ENCODE measurements at regions of chr3 and their contacts with region 1.

Region 1: GRCh38 chr3:14651440-14652251 is at the start of gene CCDC174:
- DNase-seq: peak; percentile 90 to 100 (median 94)
- ATAC-seq: peak; percentile 97
- H3K4me3 ChIP-seq: peak within 1 kb of the TSS; percentile 75
- H3K4me3 Mint-ChIP-seq: peak within 1 kb of the TSS; percentile 87
- H3K27ac ChIP-seq: peak within 1 kb of the TSS; percentile 76 to 97
- H3K27ac Mint-ChIP-seq: peak within 1 kb of the TSS; percentile 85
- H3K4me1 ChIP-seq: peaks cover 29% of the 10 kb centered on the region
- H3K4me1 Mint-ChIP-seq: peaks cover 61% of the 10 kb centered on the region
- H3K27me3 ChIP-seq: no peaks in the 10 kb centered on the region
- H3K27me3 Mint-ChIP-seq: no peaks in the 10 kb centered on the region
- CTCF ChIP-seq: no peak
- total RNA-seq, gene CCDC174: 32.9 to 37.5 TPM

Region 2: GRCh38 chr3:13884851-13885703 is 766.6 kb before region 1 on chr3:
- CTCF ChIA-PET with region 1: interaction called, 4 read pairs
- POLR2A ChIA-PET with region 1: no interaction called
- intact Hi-C with region 1: loop called in 1 of 2 experiments (anchors 10 kb)
- DNase-seq: peak; percentile 61 to 88 (median 72)
- ATAC-seq: peak; percentile 79
- H3K4me3 ChIP-seq: no peak overlapping the region
- H3K4me3 Mint-ChIP-seq: peak overlapping the region; percentile 78
- H3K27ac ChIP-seq: no peak overlapping the region
- H3K27ac Mint-ChIP-seq: peak overlapping the region; percentile 3
- H3K4me1 ChIP-seq: peaks cover 27% of the 10 kb centered on the region
- H3K4me1 Mint-ChIP-seq: peaks cover 22% of the 10 kb centered on the region
- H3K27me3 ChIP-seq: peaks cover 4 to 13% of the 10 kb centered on the region in 2 experiments
- H3K27me3 Mint-ChIP-seq: peaks cover 15% of the 10 kb centered on the region
- CTCF ChIP-seq: peak; percentile 95

Region 3: DNA sequence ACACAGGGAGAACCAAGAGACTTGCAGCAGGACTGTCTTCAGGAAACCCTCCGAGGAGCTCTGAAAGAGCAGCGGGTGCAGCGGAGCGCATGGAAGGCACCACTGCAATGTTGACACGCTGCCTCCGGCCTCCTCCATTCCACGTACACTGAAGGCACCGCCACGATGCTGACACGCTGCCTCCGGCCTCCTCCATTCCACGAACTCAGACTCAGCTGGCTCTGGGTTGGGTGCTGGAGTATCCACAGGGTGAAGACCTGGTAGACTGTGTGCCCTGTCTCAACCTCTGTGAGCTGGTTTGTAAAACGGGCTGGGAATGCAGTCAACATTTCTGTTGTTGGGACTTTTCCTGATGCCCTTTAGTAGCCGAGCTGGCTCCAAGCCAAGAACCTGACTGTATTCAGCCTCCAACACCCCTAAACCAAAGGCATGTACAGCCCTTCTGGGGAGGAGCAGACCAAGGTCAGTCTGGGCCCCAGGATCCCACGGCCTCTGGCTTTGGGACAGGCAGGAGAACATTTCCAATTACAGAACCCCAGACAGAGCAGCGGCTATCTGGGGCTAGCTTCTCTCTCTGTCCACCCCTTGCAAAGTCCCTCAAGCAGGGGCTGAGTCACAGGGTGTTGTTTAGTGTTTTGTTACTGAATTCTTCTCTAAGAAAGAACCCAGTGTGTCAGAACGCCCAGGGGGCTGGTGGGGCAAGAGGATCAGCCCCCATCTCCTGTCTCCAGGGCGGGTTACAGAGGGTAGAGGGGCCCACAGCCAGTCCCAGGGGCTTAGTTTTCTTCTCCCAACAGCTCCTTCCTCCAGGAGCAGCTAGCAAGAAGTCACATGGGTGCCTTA is 306.1 kb before region 1 on chr3:
- CTCF ChIA-PET with region 1: no interaction called
- POLR2A ChIA-PET with region 1: no interaction called
- intact Hi-C with region 1: no loop called
- DNase-seq: no peak
- ATAC-seq: no peak
- H3K4me3 ChIP-seq: no peak overlapping the region
- H3K4me3 Mint-ChIP-seq: no peak overlapping the region
- H3K27ac ChIP-seq: no peak overlapping the region
- H3K27ac Mint-ChIP-seq: no peak overlapping the region
- H3K4me1 ChIP-seq: no peaks in the 10 kb centered on the region
- H3K4me1 Mint-ChIP-seq: no peaks in the 10 kb centered on the region
- H3K27me3 ChIP-seq: no peaks in the 10 kb centered on the region
- H3K27me3 Mint-ChIP-seq: peaks cover 6% of the 10 kb centered on the region
- CTCF ChIP-seq: no peak

Region 4: DNA sequence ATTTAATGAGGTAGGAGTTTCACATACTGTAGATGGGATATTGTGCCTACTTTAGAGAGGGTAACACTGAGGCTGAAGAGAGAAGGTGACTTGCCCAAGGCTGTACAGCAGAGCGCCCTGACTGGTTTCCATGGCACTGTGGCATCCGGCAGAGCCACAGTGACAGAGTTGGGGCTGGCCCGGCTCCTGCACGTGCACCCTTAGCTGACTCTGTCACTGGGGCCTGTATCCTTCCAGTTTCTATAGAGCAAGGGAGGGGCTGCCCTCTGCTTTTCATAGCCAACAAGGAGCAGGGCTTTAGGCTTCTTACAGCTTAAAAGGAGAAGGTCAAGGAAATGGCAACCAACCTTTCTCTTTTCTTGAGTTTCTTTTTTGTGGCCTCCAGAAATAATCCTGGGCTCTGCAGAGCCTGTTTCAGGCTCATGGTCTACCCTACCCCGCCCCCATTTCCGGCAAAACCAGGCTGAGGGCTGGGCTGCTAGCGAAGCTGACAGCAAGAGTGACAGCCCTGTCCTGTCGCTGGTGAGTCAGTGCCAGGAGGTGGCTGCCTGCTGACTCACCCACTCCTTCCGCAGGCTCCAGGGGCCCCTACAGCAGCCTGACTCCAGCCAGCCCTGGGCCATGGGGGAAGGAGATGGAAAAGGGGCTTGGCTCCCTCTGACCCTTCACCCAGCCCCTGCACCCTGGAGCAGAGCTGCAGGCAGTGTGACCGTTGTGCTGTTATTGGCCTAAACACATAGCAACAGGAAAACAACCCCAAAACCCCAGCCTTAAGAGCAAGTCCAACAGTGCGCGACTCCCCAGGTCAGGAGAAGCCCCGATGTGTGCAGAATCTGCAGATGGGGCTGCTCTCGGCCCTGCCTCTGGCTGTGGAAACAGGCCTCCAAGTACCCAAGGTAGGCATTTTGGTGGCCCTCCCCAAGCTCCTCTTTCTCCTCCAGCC is 219.5 kb before region 1 on chr3:
- CTCF ChIA-PET with region 1: no interaction called
- POLR2A ChIA-PET with region 1: interaction called, 15 read pairs
- intact Hi-C with region 1: loop called in 1 of 2 experiments (anchors 2 kb)
- DNase-seq: peak; percentile 84 to 98 (median 94)
- ATAC-seq: peak; percentile 84
- H3K4me3 ChIP-seq: peak overlapping the region; percentile 31
- H3K4me3 Mint-ChIP-seq: peak overlapping the region; percentile 60
- H3K27ac ChIP-seq: peak overlapping the region; percentile 92 to 97
- H3K27ac Mint-ChIP-seq: peak overlapping the region; percentile 98
- H3K4me1 ChIP-seq: peaks cover 93% of the 10 kb centered on the region
- H3K4me1 Mint-ChIP-seq: peaks cover 92% of the 10 kb centered on the region
- H3K27me3 ChIP-seq: no peaks in the 10 kb centered on the region
- H3K27me3 Mint-ChIP-seq: no peaks in the 10 kb centered on the region
- CTCF ChIP-seq: no peak

Region 5: DNA sequence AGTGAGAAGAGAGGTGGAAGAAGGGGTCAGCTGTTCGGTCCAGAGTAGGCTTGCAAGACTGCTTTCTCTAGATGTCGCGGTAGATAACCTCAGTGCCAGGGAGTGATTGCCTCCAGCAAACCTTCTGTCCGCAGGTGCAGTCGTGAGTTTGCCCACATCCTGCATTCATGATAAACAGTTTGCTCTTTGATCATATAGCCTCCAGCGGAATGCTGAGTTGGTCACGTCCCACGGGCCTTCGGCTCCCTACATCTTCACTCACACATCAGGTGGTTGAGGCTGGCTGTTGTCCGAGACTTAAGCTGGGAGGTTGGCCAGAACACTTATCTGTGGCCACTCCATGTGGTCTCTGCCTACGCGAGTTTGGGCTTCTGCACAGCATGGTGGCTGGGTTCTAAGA is 233.6 kb after region 1 on chr3:
- CTCF ChIA-PET with region 1: no interaction called
- POLR2A ChIA-PET with region 1: interaction called, 11 read pairs
- intact Hi-C with region 1: no loop called
- DNase-seq: peak in 10 of 14 experiments; percentile 10 to 61 (median 28)
- ATAC-seq: no peak
- H3K4me3 ChIP-seq: peak overlapping the region; percentile 16
- H3K4me3 Mint-ChIP-seq: peak overlapping the region; percentile 12
- H3K27ac ChIP-seq: no peak overlapping the region
- H3K27ac Mint-ChIP-seq: peak overlapping the region; percentile 62
- H3K4me1 ChIP-seq: peaks cover 62% of the 10 kb centered on the region
- H3K4me1 Mint-ChIP-seq: peaks cover 65% of the 10 kb centered on the region
- H3K27me3 ChIP-seq: no peaks in the 10 kb centered on the region
- H3K27me3 Mint-ChIP-seq: no peaks in the 10 kb centered on the region
- CTCF ChIP-seq: no peak

Region 6: DNA sequence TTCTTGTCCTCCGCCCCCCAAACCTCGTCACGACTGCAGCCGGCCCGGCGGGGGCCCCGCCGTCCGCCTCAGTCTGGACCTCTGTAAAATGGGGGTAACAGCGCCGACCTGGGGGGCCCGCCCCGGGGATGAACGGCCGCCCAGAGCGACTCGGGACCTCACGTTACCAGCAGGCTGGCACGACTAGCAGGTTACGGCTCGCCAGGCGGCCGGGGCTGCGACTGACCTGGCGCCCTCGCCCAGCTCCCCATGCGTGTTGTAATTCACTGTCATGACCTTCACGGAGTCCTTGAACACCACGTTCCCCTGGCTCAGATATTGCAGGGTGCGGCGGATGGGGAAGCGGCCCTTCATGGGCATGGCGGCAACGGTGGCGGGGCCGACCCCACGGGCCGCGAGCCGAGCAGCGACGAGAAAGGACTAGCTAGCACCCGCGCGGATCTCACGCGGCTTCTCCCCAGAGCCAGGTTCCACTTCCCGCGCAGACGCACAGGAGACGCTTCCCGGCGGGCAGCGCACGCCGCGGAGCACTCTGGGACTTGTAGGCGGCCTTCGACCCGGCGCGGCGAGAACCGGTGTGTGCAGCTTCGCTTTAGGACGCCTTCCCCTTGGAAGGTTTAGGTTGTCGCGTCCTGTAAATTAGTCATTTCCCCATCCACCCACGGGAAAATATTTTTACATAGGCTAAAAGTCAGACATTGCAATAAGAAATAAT is 413.3 kb after region 1 on chr3 and contains the start of gene MRPS25:
- CTCF ChIA-PET with region 1: no interaction called
- POLR2A ChIA-PET with region 1: interaction called, 19 read pairs
- intact Hi-C with region 1: loop called in 1 of 2 experiments (anchors 10 kb)
- DNase-seq: peak; percentile 79 to 95 (median 85)
- ATAC-seq: peak; percentile 98
- H3K4me3 ChIP-seq: peak within 1 kb of the TSS; percentile 88
- H3K4me3 Mint-ChIP-seq: peak within 1 kb of the TSS; percentile 98
- H3K27ac ChIP-seq: peak within 1 kb of the TSS; percentile 61 to 77
- H3K27ac Mint-ChIP-seq: peak within 1 kb of the TSS; percentile 92
- H3K4me1 ChIP-seq: peaks cover 32% of the 10 kb centered on the region
- H3K4me1 Mint-ChIP-seq: peaks cover 25% of the 10 kb centered on the region
- H3K27me3 ChIP-seq: no peaks in the 10 kb centered on the region
- H3K27me3 Mint-ChIP-seq: no peaks in the 10 kb centered on the region
- CTCF ChIP-seq: no peak
- total RNA-seq, gene MRPS25: 59.9 to 60.2 TPM